ENCODE measurements at regions of chr17 and their contacts with region 1.

Region 1: DNA sequence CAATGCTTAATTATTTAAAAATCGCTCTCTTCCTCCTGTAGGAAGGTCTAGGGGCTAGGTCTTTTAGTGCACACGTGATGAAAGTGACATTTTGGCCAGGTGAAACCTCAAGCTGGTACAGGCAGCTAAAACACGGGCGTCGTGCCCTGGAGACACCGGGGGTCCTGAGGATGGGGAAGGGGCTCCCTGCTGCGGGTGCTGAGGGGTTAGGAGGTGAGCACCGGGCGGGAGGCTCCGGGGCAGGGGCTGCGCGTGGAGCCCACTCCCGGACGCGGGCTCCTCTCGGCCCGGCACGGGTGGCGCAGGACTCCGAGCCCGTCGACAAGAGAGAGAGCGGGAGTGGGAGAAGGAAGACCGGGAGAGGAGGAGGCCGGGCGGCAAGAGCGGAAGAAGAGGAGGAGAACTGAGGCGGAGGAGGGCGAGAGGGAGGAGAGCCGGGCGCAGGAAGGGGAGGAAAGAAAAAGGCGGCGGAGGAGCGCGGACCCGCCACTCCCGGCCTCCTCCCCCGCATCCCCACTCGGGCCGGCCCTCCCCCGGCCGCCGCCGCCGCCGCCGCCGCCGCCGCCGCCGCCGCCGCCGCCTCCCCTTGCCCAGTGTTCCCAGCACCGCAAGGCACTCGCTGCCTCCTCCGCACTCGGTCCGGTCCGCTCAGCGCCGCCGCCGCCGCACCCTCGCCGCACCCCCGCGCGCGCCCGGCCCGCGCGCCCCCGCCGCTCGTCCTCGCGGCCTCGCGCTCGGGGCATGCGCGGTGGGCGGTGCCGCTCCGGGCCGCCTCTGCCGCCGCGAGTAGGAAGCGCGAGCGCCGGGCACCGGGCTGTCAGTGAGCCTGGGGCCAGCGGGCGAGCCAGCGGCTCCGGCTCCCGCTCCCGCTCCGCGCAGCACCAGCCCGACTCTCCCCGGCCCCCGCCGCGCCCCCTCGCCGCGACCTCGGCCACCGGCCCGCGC is at the start of gene PRKCA:
- DNase-seq: peak; percentile 80
- H3K4me3 Mint-ChIP-seq: peak within 1 kb of the TSS; percentile 100
- H3K27ac Mint-ChIP-seq: peak within 1 kb of the TSS; percentile 95
- H3K4me1 Mint-ChIP-seq: peaks cover 38% of the 10 kb centered on the region
- H3K27me3 Mint-ChIP-seq: peaks cover 10% of the 10 kb centered on the region
- total RNA-seq, gene PRKCA: 57.6 to 61.3 TPM

Region 2: GRCh38 chr17:66290101-66290722 is 11.9 kb before region 1 on chr17:
- CTCF ChIA-PET with region 1: no interaction called
- POLR2A ChIA-PET with region 1: no interaction called
- DNase-seq: no peak
- H3K4me3 Mint-ChIP-seq: no peak overlapping the region
- H3K27ac Mint-ChIP-seq: no peak overlapping the region
- H3K4me1 Mint-ChIP-seq: peaks cover 14% of the 10 kb centered on the region
- H3K27me3 Mint-ChIP-seq: no peaks in the 10 kb centered on the region

Region 3: DNA sequence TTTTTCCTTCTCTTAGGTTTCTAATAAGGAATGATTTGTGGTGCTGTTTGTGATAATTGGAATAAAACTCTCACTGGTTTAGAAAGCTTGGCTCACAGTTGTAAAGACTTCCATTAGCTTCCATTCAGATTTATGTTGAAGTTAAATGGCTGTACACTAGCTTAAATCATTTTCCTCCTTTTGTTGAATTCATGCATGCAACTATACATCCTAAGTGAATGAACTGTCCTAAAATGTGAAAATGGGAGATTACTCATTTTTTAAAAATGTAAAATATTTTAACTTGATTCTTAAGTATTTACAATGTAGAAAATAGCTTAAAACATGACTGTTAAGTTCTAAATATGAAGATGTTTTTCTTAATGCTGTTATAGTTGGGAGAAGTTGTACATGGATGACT is 15.6 kb after region 1 on chr17:
- CTCF ChIA-PET with region 1: interaction called, 8 read pairs
- POLR2A ChIA-PET with region 1: interaction called, 19 read pairs
- DNase-seq: no peak
- H3K4me3 Mint-ChIP-seq: no peak overlapping the region
- H3K27ac Mint-ChIP-seq: no peak overlapping the region
- H3K4me1 Mint-ChIP-seq: peaks cover 31% of the 10 kb centered on the region
- H3K27me3 Mint-ChIP-seq: no peaks in the 10 kb centered on the region

Region 4: GRCh38 chr17:66331038-66331816 is 29.2 kb after region 1 on chr17:
- CTCF ChIA-PET with region 1: interaction called, 4 read pairs
- POLR2A ChIA-PET with region 1: interaction called, 15 read pairs
- DNase-seq: peak; percentile 30
- H3K4me3 Mint-ChIP-seq: peak overlapping the region; percentile 69
- H3K27ac Mint-ChIP-seq: peak overlapping the region; percentile 94
- H3K4me1 Mint-ChIP-seq: peaks cover 67% of the 10 kb centered on the region
- H3K27me3 Mint-ChIP-seq: no peaks in the 10 kb centered on the region

Region 5: DNA sequence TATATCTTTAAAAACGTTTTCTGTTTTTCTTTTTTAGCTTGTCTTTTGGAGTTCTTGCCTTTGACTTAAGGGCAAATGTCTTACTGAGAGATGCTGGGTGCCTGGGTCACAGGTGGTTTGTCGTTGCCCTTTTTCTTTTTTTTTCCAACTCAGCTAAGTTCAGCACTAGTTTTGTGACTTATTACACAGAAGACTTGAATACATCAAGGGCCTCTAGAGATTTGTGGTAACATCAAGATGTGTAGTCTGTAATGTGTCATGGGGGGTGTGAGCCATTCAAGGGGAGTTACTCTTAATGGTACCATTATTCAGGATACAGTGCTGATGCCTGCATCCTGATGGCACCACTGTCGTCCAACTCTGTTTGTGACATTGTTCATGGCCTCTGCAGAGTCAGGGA is 95.4 kb after region 1 on chr17:
- CTCF ChIA-PET with region 1: interaction called, 3 read pairs
- POLR2A ChIA-PET with region 1: interaction called, 12 read pairs
- DNase-seq: no peak
- H3K4me3 Mint-ChIP-seq: no peak overlapping the region
- H3K27ac Mint-ChIP-seq: peak overlapping the region; percentile 69
- H3K4me1 Mint-ChIP-seq: peaks cover 61% of the 10 kb centered on the region
- H3K27me3 Mint-ChIP-seq: no peaks in the 10 kb centered on the region

Region 6: GRCh38 chr17:66403846-66404556 is 101.9 kb after region 1 on chr17:
- CTCF ChIA-PET with region 1: interaction called, 3 read pairs
- POLR2A ChIA-PET with region 1: interaction called, 12 read pairs
- DNase-seq: no peak
- H3K4me3 Mint-ChIP-seq: peak overlapping the region; percentile 2
- H3K27ac Mint-ChIP-seq: peak overlapping the region; percentile 79
- H3K4me1 Mint-ChIP-seq: peaks cover 90% of the 10 kb centered on the region
- H3K27me3 Mint-ChIP-seq: no peaks in the 10 kb centered on the region

Region 7: GRCh38 chr17:66567234-66568170 is 265.4 kb after region 1 on chr17:
- CTCF ChIA-PET with region 1: interaction called, 13 read pairs
- POLR2A ChIA-PET with region 1: no interaction called
- DNase-seq: peak; percentile 83
- H3K4me3 Mint-ChIP-seq: no peak overlapping the region
- H3K27ac Mint-ChIP-seq: no peak overlapping the region
- H3K4me1 Mint-ChIP-seq: peaks cover 20% of the 10 kb centered on the region
- H3K27me3 Mint-ChIP-seq: no peaks in the 10 kb centered on the region

Region 8: DNA sequence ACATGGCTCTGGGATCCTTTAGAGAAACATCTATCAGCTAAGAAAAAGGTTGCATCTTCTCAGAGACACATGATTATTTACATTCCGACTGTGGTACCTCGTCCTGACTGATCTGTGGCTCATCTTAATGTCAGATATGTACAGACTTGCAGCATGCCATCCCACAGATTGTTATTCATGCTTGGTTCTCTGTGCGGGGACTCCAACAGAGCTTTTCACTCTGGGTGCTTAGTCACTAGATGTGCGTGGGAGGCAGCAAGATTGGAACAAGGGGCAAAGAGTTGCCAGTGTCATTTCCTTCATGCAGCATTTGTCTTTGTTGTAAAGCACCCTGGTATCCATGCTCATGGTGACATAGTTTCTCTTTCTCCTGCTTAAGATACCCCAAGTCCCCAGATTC is 353.8 kb after region 1 on chr17:
- CTCF ChIA-PET with region 1: no interaction called
- POLR2A ChIA-PET with region 1: no interaction called
- DNase-seq: no peak
- H3K4me3 Mint-ChIP-seq: no peak overlapping the region
- H3K27ac Mint-ChIP-seq: no peak overlapping the region
- H3K4me1 Mint-ChIP-seq: peaks cover 40% of the 10 kb centered on the region
- H3K27me3 Mint-ChIP-seq: no peaks in the 10 kb centered on the region

Measured in activated CD4-positive, alpha-beta memory T cell treated with anti-CD3 and anti-CD28 coated beads, Interleukin-2, amount 10 ng/mL, durations not matched to agents 7 days and 5 days (primary cell).